ENCODE measurements at regions of chr15 and their contacts with region 1.

Region 1: GRCh38 chr15:101641166-101641764 is 10.9 kb downstream of the TM2D3 start:
- DNase-seq: peak; percentile 66
- CTCF ChIP-seq: peak; percentile 83

Region 2: GRCh38 chr15:101288908-101289513 is 352.3 kb before region 1 on chr15:
- CTCF ChIA-PET with region 1: interaction called, 89 read pairs
- POLR2A ChIA-PET with region 1: no interaction called
- DNase-seq: no peak
- CTCF ChIP-seq: peak; percentile 60

Region 3: DNA sequence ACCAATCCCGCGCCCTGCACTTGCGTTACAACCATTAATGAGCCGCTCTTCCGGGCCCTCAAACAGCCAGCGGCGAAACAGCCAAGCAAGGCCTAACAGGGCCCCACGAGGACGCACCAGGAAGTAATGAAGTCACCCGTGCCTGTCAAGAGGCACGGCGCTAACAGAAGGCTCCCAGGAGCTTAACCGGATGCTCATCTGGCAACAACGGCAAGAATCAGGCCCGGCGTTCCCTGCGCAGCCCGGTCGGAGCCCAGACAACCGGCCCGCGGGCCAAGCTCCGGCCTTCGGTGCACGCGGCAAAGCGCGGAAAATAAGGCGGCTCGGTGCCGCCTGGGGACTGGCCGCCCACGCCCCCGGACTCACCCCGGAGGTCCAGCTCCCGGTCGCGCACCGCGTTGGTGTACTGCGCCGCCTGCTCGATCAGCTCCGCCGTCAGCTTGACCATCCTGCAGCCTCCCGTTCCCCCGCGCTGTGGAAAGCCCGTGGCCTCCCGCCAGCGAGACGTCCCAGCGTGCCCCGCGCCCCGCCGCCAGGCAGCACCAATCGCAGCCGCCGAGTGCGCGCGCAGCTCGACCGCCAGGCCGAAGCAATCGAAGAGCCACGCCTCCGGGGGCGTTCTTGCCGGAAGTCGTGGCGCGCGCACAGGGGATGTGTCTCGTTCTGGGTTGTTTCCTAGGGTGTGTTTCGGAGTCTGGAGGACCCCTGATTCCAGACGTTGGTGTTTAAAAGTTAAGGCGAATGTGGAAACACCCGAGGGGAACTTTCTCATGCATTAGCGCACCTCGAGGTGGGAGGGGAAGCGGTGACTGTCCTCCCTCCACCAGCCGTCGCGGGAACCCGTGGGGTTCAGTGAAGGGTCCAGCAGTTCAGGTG is 346.3 kb before region 1 on chr15 and contains the start of gene SNRPA1:
- CTCF ChIA-PET with region 1: interaction called, 89 read pairs
- POLR2A ChIA-PET with region 1: no interaction called
- DNase-seq: peak; percentile 98
- CTCF ChIP-seq: no peak

Region 4: DNA sequence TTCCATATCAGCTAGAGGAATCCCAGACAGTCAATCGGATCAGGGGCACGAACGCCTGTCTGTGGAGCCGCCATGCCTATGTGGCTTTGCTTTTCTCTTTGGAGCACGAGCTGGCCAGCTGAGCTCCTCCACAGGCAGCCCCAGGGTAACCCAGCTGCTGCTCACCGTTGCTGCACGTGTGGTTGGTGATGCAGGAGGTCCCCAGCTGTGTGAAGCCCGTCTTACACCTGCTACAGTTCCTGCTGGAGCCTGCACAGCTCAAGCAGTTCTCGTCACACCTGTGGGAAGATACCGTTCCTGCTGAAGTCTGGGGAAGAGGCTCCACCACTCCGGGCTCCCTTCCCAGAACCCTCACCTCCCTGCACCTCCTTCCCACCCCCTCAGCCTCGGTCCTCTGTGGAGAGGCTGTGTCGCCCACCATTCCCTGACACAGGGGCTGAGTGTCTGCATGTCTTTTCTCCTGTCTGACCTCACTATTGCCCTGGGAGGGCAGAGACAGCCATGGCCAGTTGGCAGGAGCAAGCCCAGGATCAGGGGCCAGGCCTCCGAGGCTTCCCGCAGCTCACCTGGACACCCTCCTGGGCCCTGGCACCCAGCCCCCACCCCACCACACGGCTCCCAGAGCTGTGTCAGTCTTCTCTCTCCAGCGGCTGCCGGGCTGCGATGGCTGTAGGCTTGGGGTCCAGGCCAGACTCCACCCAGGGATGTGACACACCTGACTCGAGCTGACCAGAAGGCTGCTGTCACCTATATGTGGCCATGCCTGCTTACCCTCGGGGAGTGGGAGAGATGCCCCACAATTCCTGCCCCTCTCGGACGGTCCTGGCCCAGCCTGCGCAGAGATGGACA is 334.0 kb before region 1 on chr15:
- CTCF ChIA-PET with region 1: interaction called, 42 read pairs
- POLR2A ChIA-PET with region 1: no interaction called
- DNase-seq: no peak
- CTCF ChIP-seq: no peak

Region 5: DNA sequence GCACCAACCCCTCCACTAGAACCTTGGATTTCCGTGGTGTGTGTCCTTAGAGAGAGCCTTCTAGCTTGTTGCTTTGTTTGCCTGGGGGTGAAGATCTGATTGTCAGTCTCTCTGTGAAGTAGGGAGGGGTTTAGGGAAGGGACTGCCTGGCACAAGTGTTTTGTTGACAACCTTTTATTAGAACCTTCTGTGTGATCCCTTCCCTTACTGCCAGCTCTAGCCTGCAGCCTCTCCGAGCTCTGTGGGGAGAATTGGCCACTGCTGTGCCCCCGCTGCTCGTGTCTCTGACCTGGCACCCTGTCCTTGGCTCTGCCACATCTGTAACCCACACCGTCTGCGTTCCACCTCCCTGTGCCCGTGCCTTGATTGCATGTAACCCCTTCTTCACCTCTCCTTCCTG is 120.9 kb before region 1 on chr15:
- CTCF ChIA-PET with region 1: no interaction called
- POLR2A ChIA-PET with region 1: no interaction called
- DNase-seq: no peak
- CTCF ChIP-seq: no peak

Region 6: GRCh38 chr15:101615986-101616848 is 25.0 kb before region 1 on chr15:
- CTCF ChIA-PET with region 1: interaction called, 11 read pairs
- POLR2A ChIA-PET with region 1: no interaction called
- DNase-seq: no peak
- CTCF ChIP-seq: no peak

Region 7: GRCh38 chr15:101652098-101652782 is 11.0 kb after region 1 on chr15 and contains the start of gene TM2D3:
- CTCF ChIA-PET with region 1: interaction called, 24 read pairs
- POLR2A ChIA-PET with region 1: interaction called, 4 read pairs
- DNase-seq: peak; percentile 96
- CTCF ChIP-seq: peak; percentile 63

Measured in GM10248 (cell line).